Activated CD4-positive, alpha-beta T cell treated with anti-CD3 and anti-CD28 coated beads for 36 hours (primary cell): ENCODE measurements at regions of chr19 and their contacts with region 1.

Region 1: GRCh38 chr19:33373701-33374421 is at the start of gene CEBPG:
- DNase-seq: peak; percentile 78
- ATAC-seq: peak; percentile 42
- H3K4me3 Mint-ChIP-seq: peak within 1 kb of the TSS; percentile 94
- H3K27ac Mint-ChIP-seq: peak within 1 kb of the TSS; percentile 93
- H3K4me1 Mint-ChIP-seq: peaks cover 45% of the 10 kb centered on the region
- H3K27me3 Mint-ChIP-seq: no peaks in the 10 kb centered on the region
- total RNA-seq, gene CEBPG: 25.9 to 29.6 TPM

Region 2: DNA sequence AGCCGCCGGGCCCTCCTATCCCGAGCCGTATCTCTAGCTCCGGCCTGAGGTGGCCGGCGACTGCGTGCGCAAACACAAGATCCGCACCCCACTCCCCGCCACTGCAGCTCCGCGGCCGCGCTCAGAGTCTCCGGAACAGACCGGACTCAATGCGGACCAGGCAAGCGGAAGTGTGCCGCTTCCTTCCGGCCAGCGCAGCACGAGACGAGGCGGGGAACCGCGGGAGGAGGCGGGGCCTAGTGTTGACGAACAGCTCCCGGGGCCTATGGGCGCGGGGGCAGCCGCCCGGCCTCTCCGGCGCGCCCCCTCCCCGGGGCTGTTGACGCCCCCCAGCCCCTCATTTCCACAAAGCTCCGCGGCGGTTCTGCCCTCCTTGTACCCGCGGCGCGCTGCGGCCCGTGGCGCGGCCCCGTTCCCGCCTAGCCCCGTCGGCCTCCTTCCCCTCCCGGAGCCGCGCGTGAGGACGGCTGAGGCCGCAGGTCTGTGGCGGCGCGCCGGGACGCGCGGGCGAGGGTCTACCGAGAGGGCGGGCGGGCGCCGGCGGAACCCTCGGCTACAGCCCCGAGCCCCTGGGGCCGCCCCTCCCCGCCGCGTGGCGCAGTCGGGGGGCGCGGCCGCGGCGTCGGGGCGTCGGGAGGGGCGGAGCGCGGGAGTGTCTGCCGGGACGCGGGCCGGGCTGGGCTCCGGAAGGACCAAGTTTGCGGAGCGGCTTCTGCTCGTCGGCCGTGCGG is 968.3 kb before region 1 on chr19 and contains the start of gene DPY19L3:
- CTCF ChIA-PET with region 1: no interaction called
- POLR2A ChIA-PET with region 1: no interaction called
- intact Hi-C with region 1: loop called in 1 of 2 experiments (anchors 2 kb)
- DNase-seq: peak; percentile 95
- ATAC-seq: peak; percentile 97
- H3K4me3 Mint-ChIP-seq: peak within 1 kb of the TSS; percentile 84
- H3K27ac Mint-ChIP-seq: peak within 1 kb of the TSS; percentile 91
- H3K4me1 Mint-ChIP-seq: peaks cover 20% of the 10 kb centered on the region
- H3K27me3 Mint-ChIP-seq: no peaks in the 10 kb centered on the region
- total RNA-seq, gene DPY19L3: 14.3 to 14.6 TPM

Region 3: GRCh38 chr19:32876919-32877285 is 497.0 kb before region 1 on chr19:
- CTCF ChIA-PET with region 1: no interaction called
- POLR2A ChIA-PET with region 1: no interaction called
- intact Hi-C with region 1: no loop called
- DNase-seq: no peak
- ATAC-seq: no peak
- H3K4me3 Mint-ChIP-seq: no peak overlapping the region
- H3K27ac Mint-ChIP-seq: no peak overlapping the region
- H3K4me1 Mint-ChIP-seq: peaks cover 3% of the 10 kb centered on the region
- H3K27me3 Mint-ChIP-seq: no peaks in the 10 kb centered on the region

Region 4: GRCh38 chr19:32971715-32972540 is 401.9 kb before region 1 on chr19 and contains the starts of genes CEP89 and FAAP24:
- CTCF ChIA-PET with region 1: interaction called, 3 read pairs
- POLR2A ChIA-PET with region 1: no interaction called
- intact Hi-C with region 1: loop called in 1 of 2 experiments (anchors 1 kb)
- DNase-seq: peak; percentile 98
- ATAC-seq: peak; percentile 100
- H3K4me3 Mint-ChIP-seq: peak within 1 kb of the TSS; percentile 98
- H3K27ac Mint-ChIP-seq: peak within 1 kb of the TSS; percentile 94
- H3K4me1 Mint-ChIP-seq: peaks cover 11% of the 10 kb centered on the region
- H3K27me3 Mint-ChIP-seq: no peaks in the 10 kb centered on the region
- total RNA-seq, gene CEP89: 16.2 to 18.5 TPM
- total RNA-seq, gene FAAP24: 8.9 to 11.9 TPM

Region 5: GRCh38 chr19:33186431-33187182 is 187.3 kb before region 1 on chr19:
- CTCF ChIA-PET with region 1: interaction called, 11 read pairs
- POLR2A ChIA-PET with region 1: no interaction called
- intact Hi-C with region 1: no loop called
- DNase-seq: no peak
- ATAC-seq: no peak
- H3K4me3 Mint-ChIP-seq: no peak overlapping the region
- H3K27ac Mint-ChIP-seq: no peak overlapping the region
- H3K4me1 Mint-ChIP-seq: peaks cover 7% of the 10 kb centered on the region
- H3K27me3 Mint-ChIP-seq: peaks cover 8% of the 10 kb centered on the region

Region 6: DNA sequence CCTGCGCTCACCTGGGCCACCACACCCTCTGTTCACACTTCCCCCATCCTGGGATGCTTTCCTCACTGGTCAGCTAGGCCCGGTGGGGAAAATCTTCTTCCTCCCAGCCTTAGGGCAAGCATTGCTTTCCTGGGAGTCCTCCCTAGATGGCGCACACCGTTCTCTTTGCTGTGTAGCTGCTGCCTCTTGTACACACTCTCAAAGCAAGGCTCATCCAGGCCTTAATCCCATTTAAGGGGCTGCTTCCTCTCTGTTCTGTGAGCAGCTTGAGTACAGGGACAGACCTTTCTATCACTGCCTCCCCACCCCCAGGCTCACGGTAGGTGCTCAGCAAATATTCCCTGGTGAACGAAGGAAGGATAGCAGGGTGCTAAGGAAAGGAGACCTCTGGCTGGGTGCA is 159.3 kb before region 1 on chr19:
- CTCF ChIA-PET with region 1: no interaction called
- POLR2A ChIA-PET with region 1: no interaction called
- intact Hi-C with region 1: no loop called
- DNase-seq: no peak
- ATAC-seq: no peak
- H3K4me3 Mint-ChIP-seq: no peak overlapping the region
- H3K27ac Mint-ChIP-seq: no peak overlapping the region
- H3K4me1 Mint-ChIP-seq: no peaks in the 10 kb centered on the region
- H3K27me3 Mint-ChIP-seq: no peaks in the 10 kb centered on the region

Region 7: GRCh38 chr19:33521480-33522370 is 147.9 kb after region 1 on chr19 and contains the start of gene PEPD:
- CTCF ChIA-PET with region 1: no interaction called
- POLR2A ChIA-PET with region 1: no interaction called
- intact Hi-C with region 1: loop called in 1 of 2 experiments (anchors 1 kb)
- DNase-seq: peak; percentile 95
- ATAC-seq: peak; percentile 97
- H3K4me3 Mint-ChIP-seq: peak within 1 kb of the TSS; percentile 89
- H3K27ac Mint-ChIP-seq: peak within 1 kb of the TSS; percentile 60
- H3K4me1 Mint-ChIP-seq: peaks cover 20% of the 10 kb centered on the region
- H3K27me3 Mint-ChIP-seq: no peaks in the 10 kb centered on the region
- total RNA-seq, gene PEPD: 26.9 to 37.4 TPM

Region 8: GRCh38 chr19:33734913-33735312 is 361.1 kb after region 1 on chr19:
- CTCF ChIA-PET with region 1: no interaction called
- POLR2A ChIA-PET with region 1: no interaction called
- intact Hi-C with region 1: no loop called
- DNase-seq: no peak
- ATAC-seq: no peak
- H3K4me3 Mint-ChIP-seq: no peak overlapping the region
- H3K27ac Mint-ChIP-seq: no peak overlapping the region
- H3K4me1 Mint-ChIP-seq: no peaks in the 10 kb centered on the region
- H3K27me3 Mint-ChIP-seq: peaks cover 7% of the 10 kb centered on the region

Region 9: DNA sequence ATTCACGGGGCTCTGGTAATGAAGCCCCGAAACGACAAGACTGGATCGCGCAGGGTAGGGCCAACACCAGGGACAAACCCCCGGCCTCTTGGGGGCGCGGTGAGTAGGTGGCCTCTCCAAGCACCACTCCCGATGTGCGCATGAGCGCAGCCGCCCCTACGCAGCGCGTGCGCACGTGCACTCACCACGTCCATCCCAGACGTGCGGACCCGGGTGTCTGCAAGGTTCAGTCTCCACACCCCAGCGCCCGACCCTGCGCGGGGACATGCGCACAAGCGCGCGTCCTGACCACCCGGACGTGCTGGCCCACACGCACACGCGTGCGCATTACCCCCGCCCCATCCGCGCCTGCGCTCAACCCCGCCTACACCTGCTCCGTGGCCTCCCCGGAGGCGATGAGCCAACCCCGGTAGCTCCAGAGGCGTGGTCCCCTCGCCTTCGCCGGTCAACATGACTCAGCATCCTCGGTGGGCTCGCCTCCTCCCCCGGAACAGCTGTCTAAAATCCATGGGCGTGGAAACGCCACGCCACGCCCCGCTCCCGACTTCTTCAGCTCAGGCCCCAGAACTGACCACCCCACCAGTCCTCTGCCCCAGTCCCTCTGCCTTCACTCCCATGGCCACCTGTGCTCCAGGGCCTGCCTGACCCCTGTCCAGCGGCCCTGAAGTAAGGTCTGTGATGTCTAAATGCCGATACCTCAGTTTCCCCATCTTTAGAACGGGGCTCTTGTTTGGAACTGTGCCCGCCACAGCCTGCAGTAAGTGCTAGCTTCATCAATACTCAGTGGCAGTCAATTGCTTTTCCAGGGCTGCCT is 985.5 kb after region 1 on chr19:
- CTCF ChIA-PET with region 1: no interaction called
- POLR2A ChIA-PET with region 1: no interaction called
- intact Hi-C with region 1: loop called in 1 of 2 experiments (anchors 5 kb)
- DNase-seq: peak; percentile 100
- ATAC-seq: peak; percentile 93
- H3K4me3 Mint-ChIP-seq: peak overlapping the region; percentile 77
- H3K27ac Mint-ChIP-seq: peak overlapping the region; percentile 89
- H3K4me1 Mint-ChIP-seq: peaks cover 43% of the 10 kb centered on the region
- H3K27me3 Mint-ChIP-seq: no peaks in the 10 kb centered on the region